Dendritic cell treated with granulocyte-macrophage colony-stimulating factor and Interleukin-4, amounts not matched to agents 40 ng/mL and 50 ng/mL, for 4 days (primary cell): ENCODE measurements at regions of chr16 and their contacts with region 1.

Region 1: GRCh38 chr16:14292051-14292825 is 221.1 kb downstream of the MRTFB start:
- H3K4me3 Mint-ChIP-seq: peak overlapping the region; percentile 4
- H3K27ac Mint-ChIP-seq: peak overlapping the region; percentile 95
- H3K4me1 Mint-ChIP-seq: peaks cover 52% of the 10 kb centered on the region
- H3K27me3 Mint-ChIP-seq: no peaks in the 10 kb centered on the region

Region 2: DNA sequence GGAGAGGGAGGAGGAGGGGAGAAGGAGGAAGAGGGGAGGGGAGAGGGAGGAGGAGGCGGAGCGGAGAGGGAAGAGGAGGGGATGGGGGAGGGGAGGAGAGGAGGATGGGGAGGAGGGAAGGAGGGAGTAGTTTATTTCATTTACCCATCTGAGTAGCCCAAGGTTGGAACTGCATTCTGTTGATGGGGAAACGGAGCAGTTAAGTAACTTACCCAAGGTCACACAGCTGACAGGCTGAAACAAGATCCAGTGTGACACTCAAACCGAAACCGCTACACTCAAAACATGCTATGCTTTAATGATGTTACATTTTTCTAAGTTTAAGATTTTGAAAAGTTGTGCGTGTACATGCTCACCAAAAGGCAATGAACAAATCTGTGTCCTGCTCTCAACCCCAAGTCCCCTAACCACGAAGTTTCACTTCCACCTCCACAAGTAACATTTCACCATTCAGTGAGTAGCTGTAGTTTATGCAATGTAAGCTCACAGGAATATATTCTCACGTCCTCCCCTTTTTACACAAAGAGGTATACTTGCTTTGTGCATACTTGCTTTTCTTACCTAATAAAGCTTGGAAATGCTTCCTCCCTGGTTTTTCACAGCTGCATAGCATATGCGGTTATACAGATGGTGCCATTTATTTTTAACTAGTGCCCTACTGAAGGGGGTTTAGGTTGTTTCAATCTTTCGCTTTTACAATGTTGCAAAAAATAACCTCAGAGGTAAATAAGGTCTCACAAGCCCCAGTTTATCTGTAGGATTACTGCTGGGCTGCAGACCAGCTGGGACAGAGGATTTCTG is 62.5 kb after region 1 on chr16:
- intact Hi-C with region 1: loop called (anchors 2 kb)
- H3K4me3 Mint-ChIP-seq: no peak overlapping the region
- H3K27ac Mint-ChIP-seq: peak overlapping the region; percentile 13
- H3K4me1 Mint-ChIP-seq: peaks cover 31% of the 10 kb centered on the region
- H3K27me3 Mint-ChIP-seq: peaks cover 54% of the 10 kb centered on the region

Region 3: DNA sequence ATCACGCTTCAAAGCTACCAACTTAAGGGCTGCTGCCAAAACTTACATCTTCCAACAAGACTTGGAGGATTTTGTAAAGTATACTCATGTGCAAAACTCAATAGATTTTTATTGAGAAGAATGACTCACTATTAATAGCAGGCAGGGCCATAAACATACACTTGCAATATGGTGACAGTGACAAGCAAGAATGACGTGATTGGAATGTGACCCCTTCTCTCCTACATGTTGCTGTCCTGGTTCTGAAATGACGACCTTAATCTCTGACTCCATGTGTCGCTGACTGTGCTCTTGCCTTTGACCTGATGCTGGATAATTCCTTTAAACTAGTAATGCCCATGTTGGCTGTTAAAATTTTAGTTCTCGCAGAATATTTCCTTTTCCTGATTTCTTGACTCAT is 163.3 kb after region 1 on chr16:
- intact Hi-C with region 1: no loop called
- H3K4me3 Mint-ChIP-seq: no peak overlapping the region
- H3K27ac Mint-ChIP-seq: no peak overlapping the region
- H3K4me1 Mint-ChIP-seq: no peaks in the 10 kb centered on the region
- H3K27me3 Mint-ChIP-seq: no peaks in the 10 kb centered on the region